Naive thymus-derived CD8-positive, alpha-beta T cell (primary cell): ENCODE measurements at regions of chr17 and their contacts with region 1.

Region 1: GRCh38 chr17:58121925-58122324 is 26.3 kb upstream of the OR4D1 start:
- DNase-seq: peak in 9 of 10 donors; percentile 21 to 77 (median 40)
- ATAC-seq: peak; percentile 83 to 96
- H3K4me3 Mint-ChIP-seq: no peak overlapping the region
- H3K27ac Mint-ChIP-seq: peak overlapping the region in 1 of 10 donors; percentile 14
- H3K4me1 Mint-ChIP-seq: peaks cover 6 to 18% (median 9%) of the 10 kb centered on the region in 4 donors
- H3K27me3 Mint-ChIP-seq: peaks cover 3 to 19% (median 11%) of the 10 kb centered on the region in 5 donors

Region 2: DNA sequence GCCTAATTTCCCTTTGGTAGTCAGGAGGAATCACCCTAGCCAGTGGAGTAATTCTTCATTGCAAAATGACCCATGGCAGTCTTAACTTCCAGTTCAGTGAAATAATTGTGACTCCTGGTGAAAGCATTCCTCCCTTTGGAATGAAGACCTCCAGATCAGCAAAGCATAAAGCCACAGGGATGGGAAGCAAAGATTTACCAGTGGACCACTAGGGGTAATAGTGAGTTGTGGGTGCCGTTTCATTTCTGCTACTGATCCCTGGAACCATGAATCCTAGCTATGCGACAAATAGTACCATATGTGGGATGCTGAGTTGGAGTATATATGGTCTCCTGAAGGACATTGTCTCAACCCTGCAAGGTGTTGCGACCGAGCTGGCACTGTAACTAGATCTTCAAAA is 25.0 kb before region 1 on chr17:
- POLR2A ChIA-PET with region 1: no interaction called
- DNase-seq: no peak
- ATAC-seq: no peak
- H3K4me3 Mint-ChIP-seq: no peak overlapping the region
- H3K27ac Mint-ChIP-seq: no peak overlapping the region
- H3K4me1 Mint-ChIP-seq: peaks cover 12 to 18% (median 13%) of the 10 kb centered on the region in 4 donors
- H3K27me3 Mint-ChIP-seq: no peaks in the 10 kb centered on the region

Region 3: GRCh38 chr17:58172369-58173071 is 50.6 kb after region 1 on chr17:
- POLR2A ChIA-PET with region 1: interaction called, 14 read pairs
- DNase-seq: peak in 8 of 10 donors; percentile 28 to 79 (median 54)
- ATAC-seq: peak; percentile 87 to 94
- H3K4me3 Mint-ChIP-seq: peak overlapping the region in 8 of 10 donors; percentile 8 to 58 (median 27)
- H3K27ac Mint-ChIP-seq: peak overlapping the region in 8 of 10 donors; percentile 0 to 87 (median 70)
- H3K4me1 Mint-ChIP-seq: peaks cover 35 to 46% (median 43%) of the 10 kb centered on the region in 4 donors
- H3K27me3 Mint-ChIP-seq: peaks cover 0 to 12% (median 0%) of the 10 kb centered on the region in 5 donors